ENCODE measurements at regions of chr11 and their contacts with region 1.

Region 1: GRCh38 chr11:47248664-47249377 is at the start of gene ACP2:
- DNase-seq: peak in 1 of 2 experiments; percentile 93
- H3K4me3 ChIP-seq: peak within 1 kb of the TSS; percentile 42 to 97 (median 93)
- H3K27ac ChIP-seq: peak within 1 kb of the TSS; percentile 96
- H3K4me1 ChIP-seq: peaks cover 0 to 9% (median 0%) of the 10 kb centered on the region in 4 experiments; a peak in 4 of 7 replicates
- H3K27me3 ChIP-seq: no peaks in the 10 kb centered on the region
- CTCF ChIP-seq: peak; percentile 0 to 51 (median 42); a peak in 3 of 4 replicates
- EP300 ChIP-seq: peak in 1 of 2 experiments; percentile 76; a peak in 1 of 3 replicates
- POLR2A ChIP-seq: peak; percentile 61 to 96
- RAD21 ChIP-seq: peak; percentile 8 to 12; a peak in 2 of 4 replicates
- total RNA-seq, gene ACP2: 17.8 and 18.9 TPM in 2 replicates

Region 2: DNA sequence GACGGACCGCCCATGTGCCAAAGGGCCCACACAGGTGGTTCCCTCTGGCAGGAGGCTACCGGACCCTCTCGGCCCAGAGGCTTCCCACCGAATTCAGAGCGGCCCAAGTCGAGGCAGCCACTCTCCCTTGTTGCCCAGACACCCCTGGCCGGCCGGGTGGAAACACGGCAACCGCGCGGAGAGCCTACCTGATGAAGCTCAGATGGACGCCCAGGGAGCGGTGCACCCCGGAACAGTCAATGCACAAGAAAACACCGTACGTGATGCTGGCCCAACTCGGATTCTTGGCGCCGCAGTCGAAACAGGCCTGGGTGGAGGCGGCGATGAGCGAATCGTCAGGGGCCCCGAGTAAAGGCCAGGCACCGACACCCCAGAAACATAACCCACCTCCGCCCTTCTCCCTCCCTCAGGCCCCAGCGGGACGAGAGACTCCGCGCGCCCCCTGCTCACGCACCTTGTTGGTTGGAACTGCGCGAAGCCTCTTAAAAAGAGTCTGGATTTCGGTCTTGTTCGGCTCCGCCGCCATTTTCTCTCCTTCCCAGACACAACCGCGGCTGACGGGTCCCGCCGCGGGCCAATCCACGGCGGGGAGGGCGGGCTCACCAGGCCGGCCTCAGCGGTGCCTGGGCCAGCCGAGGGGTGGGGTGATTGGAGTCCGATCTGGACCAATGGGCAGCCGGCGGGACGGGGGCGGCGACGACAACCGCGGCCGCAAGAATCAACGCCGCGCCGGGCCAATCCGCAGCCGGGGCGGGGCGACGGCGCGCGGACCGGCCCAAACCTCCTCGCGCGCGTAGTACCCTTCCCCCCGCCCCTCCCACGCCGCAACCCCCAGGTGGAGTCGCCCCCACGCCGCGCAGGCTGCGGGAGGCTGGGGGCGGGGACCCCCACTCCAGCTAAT is 72.2 kb before region 1 on chr11 and contains the start of gene ARFGAP2:
- CTCF ChIA-PET with region 1: interaction called, 24 read pairs
- POLR2A ChIA-PET with region 1: interaction called, 13 read pairs
- DNase-seq: peak in 1 of 2 experiments; percentile 93
- H3K4me3 ChIP-seq: peak within 1 kb of the TSS; percentile 72 to 93 (median 90)
- H3K27ac ChIP-seq: peak within 1 kb of the TSS; percentile 93
- H3K4me1 ChIP-seq: peaks cover 0 to 8% (median 1%) of the 10 kb centered on the region in 4 experiments; a peak in 5 of 7 replicates
- H3K27me3 ChIP-seq: no peaks in the 10 kb centered on the region
- CTCF ChIP-seq: no peak
- EP300 ChIP-seq: 0 out of 3 replicates have a peak, but pooled peaks of 1 of the 2 experiments have one; percentile 16
- POLR2A ChIP-seq: peak in 1 of 2 experiments; percentile 78; a peak in 2 of 3 replicates
- RAD21 ChIP-seq: no peak
- total RNA-seq, gene ARFGAP2: 50.0 and 50.2 TPM in 2 replicates

Region 3: GRCh38 chr11:47213985-47214564 is 34.7 kb before region 1 on chr11:
- CTCF ChIA-PET with region 1: interaction called, 6 read pairs
- POLR2A ChIA-PET with region 1: interaction called, 20 read pairs
- DNase-seq: peak; percentile 69 to 88
- H3K4me3 ChIP-seq: peak overlapping the region; percentile 65 to 98 (median 75)
- H3K27ac ChIP-seq: peak overlapping the region; percentile 86
- H3K4me1 ChIP-seq: peaks cover 0 to 10% (median 8%) of the 10 kb centered on the region in 4 experiments; a peak in 6 of 7 replicates
- H3K27me3 ChIP-seq: no peaks in the 10 kb centered on the region
- CTCF ChIP-seq: no peak
- EP300 ChIP-seq: no peak
- POLR2A ChIP-seq: peak; percentile 75
- RAD21 ChIP-seq: no peak

Region 4: DNA sequence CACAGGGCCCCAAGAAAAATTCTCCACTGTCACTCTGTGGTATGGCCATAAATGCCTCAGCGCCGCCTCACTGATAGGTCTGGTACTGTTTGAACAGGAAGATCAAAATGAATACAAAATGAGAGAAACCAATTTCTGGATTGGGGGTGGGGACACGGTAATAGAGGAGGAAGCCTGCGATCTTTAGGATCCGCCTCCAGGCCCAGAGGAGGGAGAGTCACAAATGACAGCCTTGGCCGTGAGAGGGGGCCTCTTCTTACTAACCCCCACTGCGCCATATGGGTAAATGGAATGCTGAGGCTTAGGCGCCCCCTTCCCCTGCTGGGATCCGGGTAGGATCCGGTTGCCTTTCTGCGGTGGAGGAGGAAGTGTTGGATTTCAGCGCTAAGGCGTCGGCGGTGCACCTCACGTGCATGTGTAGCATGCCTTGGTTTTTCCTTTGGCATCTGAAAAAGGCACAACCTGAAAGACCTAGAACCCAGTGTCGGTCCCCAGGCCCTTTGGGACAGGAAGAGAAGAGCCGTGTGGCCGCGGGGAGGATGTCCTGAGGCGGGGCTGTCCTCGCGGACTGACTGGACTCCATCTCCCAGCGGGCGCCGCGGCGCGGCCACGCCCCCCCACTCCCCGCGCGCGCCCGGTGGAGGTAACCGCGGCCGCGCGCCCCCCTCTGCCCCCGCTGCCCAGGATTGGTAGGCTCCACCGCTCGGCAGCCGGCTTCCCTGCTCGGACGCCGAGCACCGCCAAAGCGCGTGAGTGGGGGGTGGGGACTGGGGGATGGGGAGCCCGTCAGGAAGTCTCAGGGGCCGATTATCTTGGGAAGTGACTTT is 20.4 kb after region 1 on chr11:
- CTCF ChIA-PET with region 1: interaction called, 5 read pairs
- POLR2A ChIA-PET with region 1: interaction called, 12 read pairs
- DNase-seq: peak in 1 of 2 experiments; percentile 90
- H3K4me3 ChIP-seq: peak overlapping the region; percentile 75 to 93 (median 81)
- H3K27ac ChIP-seq: peak overlapping the region; percentile 65; the same call in 1 of the 2 replicates
- H3K4me1 ChIP-seq: peaks cover 14 to 25% (median 17%) of the 10 kb centered on the region in 4 experiments
- H3K27me3 ChIP-seq: no peaks in the 10 kb centered on the region
- CTCF ChIP-seq: no peak; a peak in 1 of 4 replicates
- EP300 ChIP-seq: peak in 1 of 2 experiments; percentile 79; a peak in 1 of 3 replicates
- POLR2A ChIP-seq: no peak; a peak in 1 of 3 replicates
- RAD21 ChIP-seq: no peak

Region 5: GRCh38 chr11:47348859-47349258 is 100.0 kb after region 1 on chr11:
- CTCF ChIA-PET with region 1: interaction called, 10 read pairs
- POLR2A ChIA-PET with region 1: interaction called, 5 read pairs
- DNase-seq: no peak
- H3K4me3 ChIP-seq: no peak overlapping the region
- H3K27ac ChIP-seq: no peak overlapping the region
- H3K4me1 ChIP-seq: peaks cover 0 to 12% (median 5%) of the 10 kb centered on the region in 4 experiments; a peak in 6 of 7 replicates
- H3K27me3 ChIP-seq: no peaks in the 10 kb centered on the region
- CTCF ChIP-seq: peak in 2 of 3 experiments; percentile 26 to 37; a peak in 3 of 4 replicates
- EP300 ChIP-seq: no peak
- POLR2A ChIP-seq: no peak
- RAD21 ChIP-seq: peak; percentile 40 to 54; a peak in 3 of 4 replicates

Measured in H1 (cell line).